ENCODE measurements at regions of chr1 and their contacts with region 1.

Region 1: GRCh38 chr1:90579212-90579802 is 137.8 kb downstream of the BARHL2 start:
- DNase-seq: peak; percentile 24
- ATAC-seq: peak; percentile 90
- H3K4me3 ChIP-seq: no peak overlapping the region
- H3K27ac ChIP-seq: no peak overlapping the region
- H3K4me1 ChIP-seq: no peaks in the 10 kb centered on the region
- H3K27me3 ChIP-seq: no peaks in the 10 kb centered on the region; the same call in none of the 2 replicates
- CTCF ChIP-seq: peak; percentile 79

Region 2: DNA sequence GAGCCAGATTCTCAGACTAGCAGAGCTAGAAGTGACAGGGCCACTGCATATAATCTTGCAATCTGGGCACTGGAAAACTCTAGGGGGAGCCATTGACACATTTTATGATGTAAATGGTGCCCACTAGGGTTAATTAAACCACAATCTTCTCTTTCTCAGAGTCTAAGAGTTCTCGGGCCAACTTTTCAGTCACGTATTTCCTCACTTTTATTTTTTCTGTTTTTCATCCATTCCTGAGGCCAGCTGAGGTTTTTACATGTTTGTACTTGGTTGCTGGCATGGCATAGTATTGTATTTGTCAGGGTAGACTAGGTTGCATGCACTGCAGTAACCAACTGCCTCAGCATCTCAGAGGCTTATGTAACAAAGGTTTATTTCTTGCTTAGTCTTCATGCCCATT is 446.2 kb before region 1 on chr1:
- CTCF ChIA-PET with region 1: no interaction called
- POLR2A ChIA-PET with region 1: no interaction called
- in situ Hi-C with region 1: no loop called
- intact Hi-C with region 1: loop called (anchors 10 kb)
- DNase-seq: no peak
- ATAC-seq: peak; percentile 89
- H3K4me3 ChIP-seq: no peak overlapping the region
- H3K27ac ChIP-seq: no peak overlapping the region
- H3K4me1 ChIP-seq: no peaks in the 10 kb centered on the region
- H3K27me3 ChIP-seq: peaks cover 7% of the 10 kb centered on the region; the same call in 1 of the 2 replicates
- CTCF ChIP-seq: peak; percentile 78

Region 3: GRCh38 chr1:90509225-90510048 is 69.9 kb before region 1 on chr1:
- CTCF ChIA-PET with region 1: no interaction called
- POLR2A ChIA-PET with region 1: no interaction called
- in situ Hi-C with region 1: no loop called
- intact Hi-C with region 1: no loop called
- DNase-seq: no peak
- ATAC-seq: no peak
- H3K4me3 ChIP-seq: no peak overlapping the region
- H3K27ac ChIP-seq: no peak overlapping the region
- H3K4me1 ChIP-seq: no peaks in the 10 kb centered on the region
- H3K27me3 ChIP-seq: no peaks in the 10 kb centered on the region
- CTCF ChIP-seq: no peak

Measured in Panc1 (cell line).